Panc1 (cell line): ENCODE measurements at regions of chr4 and their contacts with region 1.

Region 1: DNA sequence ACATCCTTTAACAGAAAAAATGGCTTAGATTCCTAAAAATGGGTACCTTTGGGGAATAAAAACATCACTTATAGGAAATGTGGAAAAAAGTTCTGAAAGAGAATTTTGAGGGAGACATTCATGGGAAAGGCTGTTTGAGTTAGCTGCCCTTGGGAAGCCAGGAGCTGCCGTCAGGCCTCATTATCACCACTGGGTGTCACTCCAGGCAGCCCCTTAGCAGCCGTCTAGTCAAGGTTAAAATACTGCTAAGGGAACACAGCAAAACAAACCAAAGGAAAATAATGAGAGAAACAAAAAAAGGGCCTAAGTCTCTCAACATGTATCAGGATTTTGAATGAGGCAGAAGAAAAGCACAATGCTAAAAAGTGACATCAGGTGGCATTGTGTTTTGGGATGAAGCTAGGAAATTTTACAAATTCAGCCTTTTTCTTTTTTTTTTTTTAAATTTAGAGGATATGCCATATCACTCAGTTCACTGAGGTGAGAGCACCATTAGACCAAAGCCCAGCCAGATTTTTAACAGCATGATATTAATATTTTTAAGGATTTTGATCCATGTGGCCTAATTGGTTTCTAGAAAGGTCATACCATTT is 235.3 kb downstream of the GPAT3 start:
- DNase-seq: peak; percentile 18
- ATAC-seq: peak; percentile 84
- H3K4me3 ChIP-seq: no peak overlapping the region
- H3K27ac ChIP-seq: no peak overlapping the region
- H3K4me1 ChIP-seq: no peaks in the 10 kb centered on the region
- H3K27me3 ChIP-seq: no peaks in the 10 kb centered on the region
- CTCF ChIP-seq: peak; percentile 80

Region 2: DNA sequence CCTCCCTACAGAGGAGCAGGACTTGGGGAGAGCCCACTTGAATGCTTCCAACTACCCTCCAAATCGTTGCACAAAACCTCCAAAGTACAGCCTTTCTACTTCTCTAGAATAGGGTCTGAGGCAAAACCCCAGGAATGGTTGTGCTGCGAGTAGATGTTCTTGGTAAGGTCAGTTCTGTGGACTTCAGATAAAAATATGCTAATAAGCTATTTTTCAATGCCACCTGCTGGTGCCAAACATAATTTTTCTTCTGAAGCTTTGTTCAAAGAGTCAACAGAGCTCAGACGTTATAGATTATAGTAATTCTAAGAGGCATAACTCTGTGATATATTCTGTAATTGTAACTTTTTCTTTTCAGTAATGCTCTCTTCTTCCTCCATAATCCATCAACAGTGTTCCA is 190.4 kb after region 1 on chr4:
- CTCF ChIA-PET with region 1: no interaction called
- POLR2A ChIA-PET with region 1: no interaction called
- in situ Hi-C with region 1: no loop called
- intact Hi-C with region 1: loop called (anchors 10 kb)
- DNase-seq: peak; percentile 2
- ATAC-seq: no peak
- H3K4me3 ChIP-seq: no peak overlapping the region
- H3K27ac ChIP-seq: no peak overlapping the region
- H3K4me1 ChIP-seq: no peaks in the 10 kb centered on the region
- H3K27me3 ChIP-seq: no peaks in the 10 kb centered on the region
- CTCF ChIP-seq: peak; percentile 19

Region 3: DNA sequence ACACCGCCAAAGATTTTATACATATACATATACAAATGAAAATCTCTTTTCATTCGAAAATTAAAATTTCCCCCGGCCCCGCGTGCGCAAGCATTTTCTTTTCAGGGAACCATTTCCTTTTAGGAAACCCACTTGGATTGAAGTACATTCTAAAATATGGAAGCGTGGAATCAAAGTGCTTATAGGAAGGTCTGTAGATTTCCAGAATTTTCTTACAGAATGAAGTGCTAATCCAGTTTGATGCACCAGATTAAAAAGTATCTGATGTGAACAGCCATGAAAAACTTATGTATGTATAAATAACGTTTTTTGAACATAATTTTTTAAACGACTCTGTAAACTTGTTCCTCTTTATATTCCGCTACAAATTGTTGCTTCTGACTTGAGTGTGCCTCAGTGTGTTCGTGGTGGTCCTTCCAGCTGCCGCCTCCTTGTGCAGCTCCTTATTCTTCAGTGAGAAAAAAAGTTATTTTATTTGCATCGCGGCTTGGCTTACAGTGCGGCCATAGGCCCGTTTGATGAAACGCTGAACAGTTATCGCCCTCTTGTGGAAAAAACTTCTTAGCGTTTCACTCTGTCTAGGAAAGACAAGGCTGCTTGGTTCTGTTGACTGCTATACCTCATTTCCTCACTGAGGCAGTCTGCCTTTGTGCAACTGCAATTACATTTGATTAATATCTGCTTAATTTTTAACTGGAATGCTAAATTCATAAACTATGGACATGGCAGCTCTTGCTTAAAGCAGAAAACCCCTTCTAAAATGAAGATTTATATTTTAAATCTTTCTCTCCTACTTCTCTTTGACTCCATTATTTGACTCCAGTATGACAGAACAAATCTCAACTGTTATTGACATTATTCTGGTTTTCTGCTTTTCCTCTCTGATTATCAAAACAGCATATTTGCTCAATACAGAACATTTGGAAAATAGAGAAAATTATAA is 732.6 kb after region 1 on chr4:
- CTCF ChIA-PET with region 1: no interaction called
- POLR2A ChIA-PET with region 1: no interaction called
- in situ Hi-C with region 1: no loop called
- intact Hi-C with region 1: loop called (anchors 5 kb)
- DNase-seq: peak; percentile 30
- ATAC-seq: peak; percentile 72
- H3K4me3 ChIP-seq: no peak overlapping the region
- H3K27ac ChIP-seq: no peak overlapping the region
- H3K4me1 ChIP-seq: no peaks in the 10 kb centered on the region
- H3K27me3 ChIP-seq: peaks cover 3% of the 10 kb centered on the region; the same call in 1 of the 2 replicates
- CTCF ChIP-seq: peak; percentile 79

Region 4: GRCh38 chr4:84699001-84699671 is 927.9 kb after region 1 on chr4:
- CTCF ChIA-PET with region 1: no interaction called
- POLR2A ChIA-PET with region 1: no interaction called
- in situ Hi-C with region 1: no loop called
- intact Hi-C with region 1: no loop called
- DNase-seq: no peak
- ATAC-seq: no peak
- H3K4me3 ChIP-seq: no peak overlapping the region
- H3K27ac ChIP-seq: peak overlapping the region; percentile 8; the same call in 1 of the 2 replicates
- H3K4me1 ChIP-seq: peaks cover 11% of the 10 kb centered on the region
- H3K27me3 ChIP-seq: no peaks in the 10 kb centered on the region
- CTCF ChIP-seq: no peak